ENCODE measurements at regions of chr16 and their contacts with region 1.

Region 1: DNA sequence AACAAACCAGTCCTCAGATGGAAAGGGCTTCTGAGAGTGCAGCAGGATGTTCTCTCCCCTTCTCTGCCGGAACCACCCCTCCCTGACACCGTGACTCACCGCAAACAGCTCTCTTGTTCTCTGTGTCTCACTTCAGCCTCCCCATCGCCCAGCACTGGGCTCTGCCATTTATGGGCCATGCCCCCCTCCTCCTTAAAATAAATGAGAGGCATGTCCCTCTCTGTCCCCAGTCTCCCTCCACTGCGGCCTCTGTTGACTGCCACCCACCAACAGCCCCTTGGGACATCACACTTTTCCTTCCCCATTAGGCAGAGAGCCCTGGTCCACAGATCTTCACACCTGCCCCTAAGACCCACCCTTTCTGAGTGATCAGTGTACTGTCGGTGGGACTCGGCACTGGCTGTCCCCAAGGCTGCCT is 6.3 kb downstream of the CCDC102A start:
- DNase-seq: no peak
- ATAC-seq: peak in 4 of 8 donors; percentile 41 to 62 (median 52)
- H3K4me3 ChIP-seq: no peak overlapping the region
- H3K27ac ChIP-seq: peak overlapping the region in 2 of 10 donors; percentile 7 to 83
- H3K4me1 ChIP-seq: peaks cover 7 to 55% (median 34%) of the 10 kb centered on the region in 9 donors
- H3K27me3 ChIP-seq: peaks cover 0 to 25% (median 0%) of the 10 kb centered on the region in 7 donors
- CTCF ChIP-seq: no peak

Region 2: GRCh38 chr16:57265850-57266530 is 264.1 kb before region 1 on chr16:
- intact Hi-C with region 1: no loop called
- DNase-seq: peak; percentile 73 to 78
- ATAC-seq: peak; percentile 50 to 94 (median 84)
- H3K4me3 ChIP-seq: peak overlapping the region in 4 of 10 donors; percentile 8 to 24 (median 15)
- H3K27ac ChIP-seq: peak overlapping the region; percentile 31 to 80 (median 74)
- H3K4me1 ChIP-seq: peaks cover 8 to 41% (median 30%) of the 10 kb centered on the region in 9 donors
- H3K27me3 ChIP-seq: no peaks in the 10 kb centered on the region
- CTCF ChIP-seq: no peak

Region 3: DNA sequence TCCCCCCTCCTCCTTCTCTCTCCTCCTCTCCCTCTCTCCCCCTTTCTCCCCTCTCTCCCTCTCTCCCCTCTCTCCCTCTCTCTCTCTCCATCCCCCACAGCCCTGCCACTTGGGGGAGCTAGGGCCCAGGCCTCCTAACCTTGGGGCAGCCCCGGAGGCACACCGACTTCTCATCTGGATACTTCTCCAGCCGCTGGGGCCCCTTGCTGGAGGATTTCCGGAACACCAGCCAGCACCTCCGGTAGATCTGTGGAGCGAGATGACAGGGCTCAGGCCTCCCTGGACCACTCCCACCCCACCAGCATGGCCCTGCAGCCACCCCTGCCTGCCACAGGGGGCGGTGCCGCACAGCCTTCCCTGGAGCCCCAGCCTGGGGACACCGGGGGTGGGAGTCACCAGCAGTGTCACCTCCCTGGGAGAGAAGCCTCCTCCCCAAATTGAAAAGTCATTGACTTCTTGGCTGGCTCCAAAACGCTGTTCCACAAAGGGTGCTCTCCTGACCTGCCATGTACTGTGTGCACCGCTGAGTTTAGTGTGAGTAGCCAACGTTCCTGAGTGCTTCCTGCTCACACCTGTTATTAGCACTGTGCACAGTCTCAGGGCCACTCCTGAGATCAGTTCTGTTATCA is 54.3 kb before region 1 on chr16:
- intact Hi-C with region 1: loop called in 1 of 10 experiments (anchors 5 kb)
- DNase-seq: no peak
- ATAC-seq: peak in 6 of 8 donors; percentile 24 to 55 (median 36)
- H3K4me3 ChIP-seq: no peak overlapping the region
- H3K27ac ChIP-seq: peak overlapping the region in 1 of 10 donors; percentile 36
- H3K4me1 ChIP-seq: peaks cover 19 to 65% (median 49%) of the 10 kb centered on the region in 9 donors
- H3K27me3 ChIP-seq: peaks cover 0 to 11% (median 0%) of the 10 kb centered on the region in 7 donors
- CTCF ChIP-seq: peak; percentile 35 to 77 (median 61)

Region 4: DNA sequence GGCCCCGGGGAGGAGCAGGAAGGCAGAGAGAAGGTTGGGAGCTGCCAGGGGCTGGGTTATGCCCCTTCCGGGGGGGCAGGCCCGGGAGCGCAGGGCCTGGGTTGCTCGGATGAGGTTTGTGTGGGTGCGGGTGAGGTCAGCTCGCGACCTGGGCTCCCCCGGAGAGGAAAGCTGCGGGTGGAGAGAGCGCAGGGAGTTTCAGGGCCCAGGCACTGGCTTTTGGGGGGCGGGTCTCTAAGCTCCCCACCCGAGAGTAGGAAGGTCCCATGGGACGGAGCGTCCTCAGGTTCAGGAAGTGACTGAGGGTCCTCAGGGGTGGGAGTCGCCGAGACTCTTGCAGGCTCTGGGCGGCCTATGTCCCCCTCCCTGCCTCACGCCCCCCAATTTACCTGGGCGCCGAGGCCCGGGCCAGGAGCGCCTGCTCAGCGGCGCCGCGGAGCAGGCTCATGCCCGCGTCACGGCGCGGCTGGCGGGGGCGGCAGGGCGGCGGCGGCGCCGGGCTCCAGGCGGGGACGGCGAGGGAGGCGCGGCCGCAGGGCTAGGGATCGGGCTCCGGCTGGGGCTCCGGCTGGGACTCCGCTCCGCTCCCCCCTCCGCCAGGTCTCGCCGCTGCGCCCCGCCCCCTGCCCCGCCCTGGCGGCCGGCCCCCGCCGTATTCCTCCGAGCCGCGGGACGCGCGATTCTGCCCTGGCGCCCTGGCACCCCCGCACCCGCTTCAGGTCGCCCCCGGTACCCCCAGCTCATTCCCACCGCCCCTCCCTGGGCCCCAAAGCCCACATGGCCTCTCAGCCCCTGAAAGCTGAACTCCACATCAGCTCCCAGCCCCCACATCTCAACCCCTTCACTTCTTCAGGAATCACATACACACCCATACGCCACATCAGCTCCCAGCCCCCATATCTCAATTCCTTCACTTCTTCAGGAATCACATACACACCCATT is 43.9 kb before region 1 on chr16 and contains the start of gene DOK4:
- intact Hi-C with region 1: loop called in 2 of 10 experiments (anchors 5 kb)
- DNase-seq: peak; percentile 80 to 87
- ATAC-seq: peak; percentile 89 to 97 (median 94)
- H3K4me3 ChIP-seq: peak within 1 kb of the TSS; percentile 58 to 90 (median 82)
- H3K27ac ChIP-seq: peak within 1 kb of the TSS in 9 of 10 donors; percentile 40 to 84 (median 77)
- H3K4me1 ChIP-seq: peaks cover 5 to 26% (median 21%) of the 10 kb centered on the region in 9 donors
- H3K27me3 ChIP-seq: peaks cover 0 to 7% (median 0%) of the 10 kb centered on the region in 7 donors
- CTCF ChIP-seq: no peak
- total RNA-seq, gene DOK4: 3.6 to 10.7 (median 8.0) TPM